Dorsolateral prefrontal cortex (tissue), 120 donors: ENCODE measurements at regions of chr20 and their contacts with region 1.

Region 1: GRCh38 chr20:22861229-22861980 is 173.7 kb upstream of the SSTR4 start:
- DNase-seq: no peak
- H3K4me3 ChIP-seq: no peak overlapping the region
- H3K27ac ChIP-seq: no peak overlapping the region
- H3K27me3 ChIP-seq: peaks cover 0 to 7% (median 0%) of the 10 kb centered on the region in 45 donors
- CTCF ChIP-seq: no peak

Region 2: DNA sequence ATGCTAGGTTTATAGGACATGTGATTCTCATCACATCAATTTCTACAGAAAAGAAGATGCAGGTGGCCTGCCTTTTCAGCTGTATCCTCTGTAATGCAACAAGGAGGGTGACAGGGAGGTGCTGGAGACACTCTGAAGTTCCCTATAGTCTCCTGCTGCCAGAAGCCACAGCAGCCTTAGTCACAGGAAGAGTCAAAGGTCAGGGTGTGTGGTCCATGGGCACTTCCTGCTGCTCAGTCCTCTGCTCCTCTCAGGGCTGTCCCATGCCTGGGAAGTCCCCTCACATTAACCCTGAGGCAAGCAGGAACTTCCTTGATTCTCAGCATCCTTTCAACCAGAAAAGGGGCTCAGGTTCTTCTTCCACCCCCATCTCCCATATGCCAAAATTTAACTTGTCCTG is 132.2 kb before region 1 on chr20:
- intact Hi-C with region 1: loop called in 1 of 2 experiments (anchors 10 kb)
- DNase-seq: no peak
- H3K4me3 ChIP-seq: no peak overlapping the region
- H3K27ac ChIP-seq: no peak overlapping the region
- H3K27me3 ChIP-seq: peaks cover 0 to 16% (median 0%) of the 10 kb centered on the region in 45 donors
- CTCF ChIP-seq: no peak

Region 3: GRCh38 chr20:23350196-23350903 is 488.9 kb after region 1 on chr20 and contains the start of gene NXT1:
- intact Hi-C with region 1: no loop called
- DNase-seq: peak; percentile 94 to 99 (median 98)
- H3K4me3 ChIP-seq: peak within 1 kb of the TSS; percentile 67 to 100 (median 97)
- H3K27ac ChIP-seq: peak within 1 kb of the TSS; percentile 84 to 100 (median 98)
- H3K27me3 ChIP-seq: no peaks in the 10 kb centered on the region
- CTCF ChIP-seq: peak in 11 of 56 donors; percentile 0 to 32 (median 20)
- total RNA-seq, gene NXT1: 3.2 to 13.1 (median 6.7) TPM